Lower leg skin (tissue), 4 donors: ENCODE measurements at regions of chr1 and their contacts with region 1.

Region 1: DNA sequence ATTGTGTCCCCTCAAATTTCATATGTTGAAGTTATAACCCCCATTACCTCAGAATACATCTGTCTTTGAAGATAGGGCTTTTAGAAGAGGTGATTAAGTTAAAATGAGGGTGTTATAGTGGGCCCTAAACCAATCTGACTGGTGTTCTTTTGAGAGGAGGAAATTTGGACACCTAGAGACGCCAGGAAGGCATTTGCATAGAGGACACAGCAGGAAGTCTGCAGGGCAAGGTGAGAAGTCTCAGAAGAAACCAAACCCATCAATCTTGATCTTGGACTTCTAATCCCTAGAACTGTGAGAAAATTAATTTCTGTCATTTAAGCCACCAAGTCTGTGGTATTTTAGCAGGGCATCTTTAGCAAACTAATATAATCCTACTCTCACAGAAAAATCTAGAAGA is 13.0 kb downstream of the GOLPH3L start:
- DNase-seq: no peak
- H3K4me3 ChIP-seq: no peak overlapping the region
- CTCF ChIP-seq: no peak
- POLR2A ChIP-seq: no peak

Region 2: GRCh38 chr1:150537732-150538684 is 145.9 kb before region 1 on chr1:
- intact Hi-C with region 1: no loop called
- DNase-seq: no peak
- H3K4me3 ChIP-seq: no peak overlapping the region
- CTCF ChIP-seq: no peak
- POLR2A ChIP-seq: no peak

Region 3: GRCh38 chr1:150661156-150661555 is 22.8 kb before region 1 on chr1:
- intact Hi-C with region 1: loop called (anchors 1 kb)
- DNase-seq: no peak
- H3K4me3 ChIP-seq: no peak overlapping the region
- CTCF ChIP-seq: no peak
- POLR2A ChIP-seq: no peak

Region 4: DNA sequence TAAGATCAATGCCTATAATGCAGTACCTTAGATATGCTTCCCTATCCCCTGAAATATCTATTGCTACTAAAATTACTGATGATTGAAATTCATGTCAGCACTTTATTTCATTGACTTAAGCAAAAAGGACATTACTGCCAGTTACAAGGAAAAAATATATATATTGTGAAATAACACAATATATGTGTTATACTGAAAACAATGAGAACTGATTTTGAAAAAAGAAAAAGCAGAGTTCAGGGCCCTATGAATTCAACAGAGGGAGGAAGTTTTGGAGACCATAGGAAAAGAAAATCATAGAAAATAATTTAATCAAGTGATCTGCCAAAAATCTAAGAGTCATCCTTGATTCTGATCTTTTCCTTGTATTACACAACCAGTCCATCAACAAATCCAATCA is 28.1 kb after region 1 on chr1:
- intact Hi-C with region 1: loop called (anchors 2 kb)
- DNase-seq: no peak
- H3K4me3 ChIP-seq: no peak overlapping the region
- CTCF ChIP-seq: no peak
- POLR2A ChIP-seq: no peak